HEK293T (cell line): ENCODE measurements at regions of chr2 and their contacts with region 1.

Region 1: GRCh38 chr2:219029829-219030165 is 11.5 kb downstream of the CFAP65 start:
- DNase-seq: peak; percentile 89

Region 2: GRCh38 chr2:218910741-218911140 is 119.1 kb before region 1 on chr2:
- CTCF ChIA-PET with region 1: no interaction called
- POLR2A ChIA-PET with region 1: no interaction called
- DNase-seq: no peak

Region 3: DNA sequence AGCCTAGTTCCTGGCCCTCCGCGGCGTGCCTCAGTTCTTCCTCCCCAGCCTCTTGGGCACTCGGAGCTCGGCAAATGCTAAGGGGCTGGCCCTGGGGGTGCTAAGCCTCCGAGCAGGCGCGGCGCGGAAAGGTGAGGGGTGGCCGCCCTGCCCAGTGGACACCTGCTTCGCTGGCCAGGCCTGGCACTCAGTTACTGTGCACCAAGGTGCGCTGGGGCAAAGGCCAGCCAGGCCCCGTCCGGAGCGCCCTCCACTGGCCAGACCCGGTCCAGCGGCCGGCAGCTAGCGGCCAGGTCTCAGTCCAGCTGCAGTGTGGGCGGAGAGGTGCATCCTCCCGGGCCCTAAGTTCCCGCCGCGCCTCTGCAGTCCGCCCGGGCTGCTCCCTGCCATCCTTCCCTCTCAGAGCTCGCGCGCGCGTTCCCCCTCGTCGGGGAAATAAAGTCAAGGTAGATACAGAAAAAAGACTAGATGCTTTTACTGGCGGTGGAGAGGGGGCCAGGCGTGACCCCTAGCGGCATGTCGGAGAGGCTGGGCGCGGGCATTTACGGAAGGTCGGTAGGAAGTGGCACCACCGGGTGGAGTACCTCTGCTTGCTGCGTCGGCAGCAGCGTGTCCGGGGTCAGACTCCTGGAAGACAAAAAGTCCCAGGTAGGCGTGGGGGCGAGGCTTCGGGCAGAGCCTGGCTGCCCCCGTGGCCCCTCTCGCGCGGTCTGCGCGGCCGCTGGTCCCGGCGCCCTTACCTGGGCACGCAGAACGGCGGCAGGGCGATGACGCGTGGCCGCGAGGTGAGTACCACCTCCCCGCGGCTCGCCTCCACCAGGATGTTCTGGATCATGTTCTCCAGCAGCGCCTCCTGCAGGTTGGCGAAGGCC is 27.2 kb before region 1 on chr2:
- CTCF ChIA-PET with region 1: interaction called, 20 read pairs
- POLR2A ChIA-PET with region 1: no interaction called
- DNase-seq: peak; percentile 93

Region 4: DNA sequence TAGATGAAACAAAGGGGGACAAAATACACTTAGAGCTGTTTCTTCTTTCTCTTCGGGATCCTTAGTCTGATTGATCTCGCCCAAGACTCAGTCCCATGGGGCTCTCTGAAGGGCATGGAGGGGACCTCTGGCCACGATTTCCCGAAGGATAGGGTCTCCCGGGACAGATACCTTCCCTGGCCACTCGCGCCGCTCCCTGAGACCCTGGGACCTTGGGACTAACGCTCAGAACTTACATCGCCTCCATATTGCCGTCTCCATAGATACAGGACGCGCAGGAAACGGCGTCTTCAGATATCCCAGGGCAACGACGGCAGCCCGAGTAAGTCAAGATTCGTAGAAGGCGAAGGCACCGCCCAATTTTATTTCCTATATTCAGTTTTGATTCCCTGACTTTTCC is 11.5 kb after region 1 on chr2 and contains the start of gene CFAP65:
- CTCF ChIA-PET with region 1: interaction called, 19 read pairs
- POLR2A ChIA-PET with region 1: no interaction called
- DNase-seq: no peak

Region 5: GRCh38 chr2:219119422-219120043 is 89.7 kb after region 1 on chr2:
- CTCF ChIA-PET with region 1: interaction called, 21 read pairs
- POLR2A ChIA-PET with region 1: interaction called, 3 read pairs
- DNase-seq: peak; percentile 66

Region 6: DNA sequence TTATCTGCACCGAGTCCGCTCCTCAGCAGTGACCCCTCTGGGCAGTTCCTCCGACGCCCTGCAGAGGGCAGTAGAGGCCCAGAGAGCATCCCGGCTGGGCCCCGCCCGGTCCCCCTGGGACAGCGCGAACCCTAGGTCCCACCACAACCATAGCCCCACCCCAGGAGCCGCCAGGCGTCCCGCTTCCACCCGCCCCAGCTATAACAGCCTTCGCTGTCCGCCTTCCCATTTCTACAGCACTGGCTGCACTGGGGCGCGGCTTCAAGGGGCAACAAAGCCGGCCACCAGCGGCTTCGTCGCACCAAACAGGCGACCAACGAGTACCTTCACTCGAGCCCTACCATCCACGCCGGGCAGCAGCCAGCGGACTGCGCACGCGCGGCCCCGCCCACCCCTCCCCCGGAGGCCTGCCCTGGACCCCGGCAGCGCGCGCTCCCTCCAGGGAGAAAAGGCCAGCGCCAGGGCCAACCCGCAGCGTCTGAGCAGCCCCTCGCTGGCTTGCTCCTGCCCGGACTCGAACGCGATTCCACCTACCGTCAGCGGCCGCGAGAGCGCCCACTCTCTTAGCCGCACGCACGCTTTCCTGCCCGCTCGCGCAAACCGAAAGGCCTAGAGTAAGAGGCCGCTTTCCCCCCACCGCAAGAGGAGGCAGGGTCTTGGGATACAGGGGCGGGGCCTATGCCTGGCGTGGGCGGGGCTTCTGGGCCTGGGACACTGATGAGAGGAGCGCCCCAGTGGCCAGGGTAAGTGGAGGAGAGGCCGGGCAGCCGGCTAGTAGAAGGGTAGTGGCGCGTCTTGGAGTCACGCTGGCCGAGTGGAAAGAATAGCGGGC is 130.6 kb after region 1 on chr2 and contains the start of gene NHEJ1:
- CTCF ChIA-PET with region 1: interaction called, 40 read pairs
- POLR2A ChIA-PET with region 1: no interaction called
- DNase-seq: peak; percentile 95

Region 7: DNA sequence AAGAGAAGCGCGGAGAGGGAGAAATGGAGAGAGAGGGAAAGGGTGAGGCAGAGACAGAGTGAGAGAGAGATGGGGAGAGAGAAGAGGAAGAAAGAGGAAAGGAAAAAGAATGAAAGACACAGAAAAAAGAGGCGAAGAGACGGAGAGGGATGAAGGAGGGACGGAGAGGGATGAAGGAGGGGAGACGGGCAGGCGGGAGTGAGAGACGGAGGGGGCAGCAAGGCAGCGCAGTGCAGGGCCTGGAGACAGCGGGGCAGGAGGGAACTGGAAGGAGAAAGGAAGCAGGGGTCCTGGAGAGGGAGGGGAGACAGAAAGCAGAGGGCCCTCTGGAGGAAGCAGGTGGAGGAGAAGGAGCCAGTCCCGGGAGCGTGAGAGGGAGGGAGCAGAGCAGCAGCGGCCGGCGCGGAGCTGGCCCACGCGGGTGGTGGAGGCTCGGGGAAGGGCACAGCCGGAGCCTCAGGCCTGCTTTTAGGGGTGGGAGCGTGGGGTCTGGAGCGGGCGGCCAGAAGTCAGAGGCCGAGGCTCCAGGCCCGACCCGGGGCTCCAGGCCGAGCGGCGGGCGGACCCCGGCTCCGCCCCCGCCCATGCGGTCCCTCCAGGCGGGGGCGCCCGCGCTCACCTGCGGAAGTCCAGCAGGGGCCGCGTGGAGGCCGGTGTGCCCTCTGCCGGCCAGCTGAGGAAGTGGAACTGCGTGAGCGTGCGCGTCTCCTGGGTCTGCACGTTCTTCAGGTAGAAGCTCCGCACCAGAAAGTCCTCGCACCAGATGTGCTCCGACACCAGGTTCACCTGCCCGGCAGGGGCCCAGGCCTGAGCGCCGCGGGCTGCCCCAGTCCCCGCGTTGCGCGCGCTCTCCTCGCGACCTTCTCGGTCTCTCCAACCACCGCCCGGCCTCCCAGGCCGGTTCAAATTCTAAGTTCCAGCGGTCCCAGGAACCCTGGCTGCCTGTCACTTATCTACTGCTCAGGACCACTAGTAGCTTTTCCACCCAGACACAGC is 264.9 kb after region 1 on chr2:
- CTCF ChIA-PET with region 1: no interaction called
- POLR2A ChIA-PET with region 1: no interaction called
- DNase-seq: peak; percentile 94